ENCODE measurements at regions of chr12 and their contacts with region 1.

Region 1: GRCh38 chr12:93624595-93625294 is 52.3 kb downstream of the SOCS2 start:
- DNase-seq: peak; percentile 59
- H3K4me3 ChIP-seq: no peak overlapping the region
- H3K27ac ChIP-seq: no peak overlapping the region
- H3K4me1 ChIP-seq: no peaks in the 10 kb centered on the region
- H3K27me3 ChIP-seq: no peaks in the 10 kb centered on the region
- CTCF ChIP-seq: no peak

Region 2: DNA sequence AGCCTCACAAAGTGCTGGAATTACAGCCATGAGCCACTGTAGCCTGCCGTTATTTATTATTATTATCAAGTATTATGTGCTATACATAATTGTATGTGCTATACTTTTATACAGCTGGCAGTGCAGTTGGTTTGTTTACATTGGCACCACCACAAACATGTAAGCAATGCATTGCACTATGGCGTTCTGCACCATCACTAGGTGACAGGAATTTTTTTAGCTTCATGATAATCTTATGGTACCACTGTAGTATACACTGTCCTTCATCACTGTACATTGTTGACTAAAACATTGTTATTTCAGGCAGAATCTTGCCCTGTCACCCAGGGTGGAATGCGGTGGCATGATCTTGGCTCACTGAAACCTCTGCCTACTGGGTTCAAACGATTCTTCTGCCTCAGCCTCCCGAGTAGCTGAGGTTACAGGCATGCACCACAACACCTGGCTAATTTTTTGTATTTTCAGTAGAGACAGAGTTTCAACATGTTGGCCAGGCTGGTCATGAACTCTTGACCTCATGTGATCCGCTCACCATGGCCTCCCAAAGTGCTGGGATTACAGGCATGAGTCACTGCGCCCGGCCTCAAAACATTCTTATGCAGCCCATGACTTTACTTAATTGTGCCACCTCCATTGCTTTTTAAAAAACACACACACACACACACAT is 140.3 kb before region 1 on chr12:
- CTCF ChIA-PET with region 1: no interaction called
- POLR2A ChIA-PET with region 1: interaction called, 10 read pairs
- intact Hi-C with region 1: no loop called
- DNase-seq: no peak
- H3K4me3 ChIP-seq: no peak overlapping the region
- H3K27ac ChIP-seq: no peak overlapping the region
- H3K4me1 ChIP-seq: no peaks in the 10 kb centered on the region
- H3K27me3 ChIP-seq: no peaks in the 10 kb centered on the region
- CTCF ChIP-seq: no peak

Region 3: GRCh38 chr12:93671044-93671443 is 46.3 kb after region 1 on chr12:
- CTCF ChIA-PET with region 1: no interaction called
- POLR2A ChIA-PET with region 1: interaction called, 14 read pairs
- intact Hi-C with region 1: no loop called
- DNase-seq: no peak
- H3K4me3 ChIP-seq: no peak overlapping the region
- H3K27ac ChIP-seq: no peak overlapping the region
- H3K4me1 ChIP-seq: no peaks in the 10 kb centered on the region
- H3K27me3 ChIP-seq: no peaks in the 10 kb centered on the region
- CTCF ChIP-seq: no peak

Region 4: DNA sequence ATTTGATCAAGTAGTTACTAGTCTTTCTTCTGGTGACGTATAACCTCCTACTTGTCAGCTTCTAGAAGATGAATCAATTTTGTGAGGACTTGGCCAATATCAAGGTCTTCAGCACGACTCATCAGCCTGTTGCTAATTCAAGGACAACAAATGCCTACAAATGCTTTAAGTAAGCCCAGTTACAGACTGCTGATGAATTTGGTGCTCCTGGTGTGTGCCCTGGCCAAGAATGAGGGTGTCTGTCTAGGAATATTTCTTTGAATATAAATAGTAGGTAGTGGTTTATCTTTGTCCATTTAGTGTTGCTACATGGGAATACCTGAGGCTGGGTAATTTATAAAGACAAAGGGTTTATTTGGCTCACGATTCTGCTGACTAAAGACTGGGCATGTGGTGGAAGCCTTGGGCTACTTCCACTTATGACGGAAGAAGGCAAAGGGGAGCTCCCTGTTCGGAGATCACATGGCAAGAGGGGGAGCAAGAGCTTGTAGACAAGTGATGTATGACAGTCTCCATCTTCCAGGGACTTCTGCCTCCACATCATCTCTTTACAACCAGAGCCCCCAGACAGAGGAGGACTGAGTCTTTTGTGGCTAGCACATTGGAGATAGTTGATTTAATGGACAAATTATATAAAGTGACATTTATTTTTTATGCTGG is 232.7 kb after region 1 on chr12:
- CTCF ChIA-PET with region 1: no interaction called
- POLR2A ChIA-PET with region 1: no interaction called
- intact Hi-C with region 1: no loop called
- DNase-seq: peak; percentile 9
- H3K4me3 ChIP-seq: no peak overlapping the region
- H3K27ac ChIP-seq: no peak overlapping the region
- H3K4me1 ChIP-seq: peaks cover 7% of the 10 kb centered on the region
- H3K27me3 ChIP-seq: no peaks in the 10 kb centered on the region
- CTCF ChIP-seq: no peak